Astrocyte of the cerebellum (primary cell): ENCODE measurements at regions of chr10 and their contacts with region 1.

Region 1: DNA sequence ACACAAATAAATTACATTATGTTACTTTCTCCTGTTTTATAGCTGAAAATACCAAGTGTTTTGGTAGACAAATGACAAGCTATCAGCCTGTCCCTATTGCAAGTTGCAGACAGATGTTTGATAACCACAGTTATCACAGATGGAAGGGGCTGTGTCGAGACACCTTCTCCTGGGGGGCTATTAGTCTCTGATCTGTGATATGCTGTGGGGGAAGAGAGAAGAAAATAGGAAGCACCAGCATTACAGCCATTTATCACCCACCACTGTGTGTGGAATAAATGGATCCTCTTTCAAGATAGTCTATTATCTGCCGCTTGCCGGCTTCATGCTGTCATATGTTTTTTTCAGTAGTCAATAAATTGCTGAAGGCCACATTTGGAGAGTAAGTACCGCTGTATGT is 597.2 kb upstream of the ADARB2 start:
- DNase-seq: no peak
- H3K4me3 ChIP-seq: no peak overlapping the region
- CTCF ChIP-seq: no peak

Region 2: GRCh38 chr10:2414562-2414961 is 80.0 kb after region 1 on chr10:
- in situ Hi-C with region 1: no loop called
- DNase-seq: no peak
- H3K4me3 ChIP-seq: no peak overlapping the region
- CTCF ChIP-seq: no peak

Region 3: GRCh38 chr10:2425320-2425719 is 90.7 kb after region 1 on chr10:
- in situ Hi-C with region 1: loop called (anchors 5 kb)
- DNase-seq: no peak
- H3K4me3 ChIP-seq: no peak overlapping the region
- CTCF ChIP-seq: no peak